ENCODE measurements at regions of chr9 and their contacts with region 1.

Region 1: DNA sequence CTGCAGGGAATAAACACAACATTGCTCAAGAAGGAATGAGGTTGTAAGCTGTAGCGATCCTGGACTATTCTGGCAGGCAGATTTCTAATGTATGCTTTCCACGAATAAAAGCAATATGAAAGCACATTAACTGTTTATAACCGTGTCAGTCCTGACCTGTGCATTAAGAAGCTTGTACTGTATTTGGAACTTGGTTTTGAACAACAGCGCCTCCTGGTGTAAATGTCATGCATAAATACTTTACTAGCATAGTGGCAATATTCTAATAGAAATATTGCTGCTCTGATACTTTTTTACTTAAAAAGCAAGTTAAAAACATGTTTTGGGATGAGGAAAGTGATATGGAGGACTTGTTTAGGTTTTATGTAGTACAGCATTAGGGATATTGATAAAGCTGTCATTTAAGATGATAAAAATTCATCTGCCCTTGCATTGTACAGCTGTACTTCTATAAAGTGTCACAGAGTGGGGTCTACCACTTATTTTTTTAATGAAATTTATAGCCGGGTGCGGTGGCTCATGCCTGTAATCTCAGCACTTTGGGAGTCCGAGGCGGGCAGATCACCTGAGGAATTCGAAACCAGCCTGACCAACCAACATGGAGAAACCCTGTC is 70.7 kb upstream of the GNE start:
- DNase-seq: no peak
- H3K4me3 ChIP-seq: no peak overlapping the region
- H3K27ac ChIP-seq: no peak overlapping the region
- H3K4me1 ChIP-seq: peaks cover 0 to 24% (median 13%) of the 10 kb centered on the region in 4 donors
- H3K27me3 ChIP-seq: no peaks in the 10 kb centered on the region
- CTCF ChIP-seq: peak; percentile 72 to 81 (median 81)
- EP300 ChIP-seq: no peak
- POLR2A ChIP-seq: no peak

Region 2: DNA sequence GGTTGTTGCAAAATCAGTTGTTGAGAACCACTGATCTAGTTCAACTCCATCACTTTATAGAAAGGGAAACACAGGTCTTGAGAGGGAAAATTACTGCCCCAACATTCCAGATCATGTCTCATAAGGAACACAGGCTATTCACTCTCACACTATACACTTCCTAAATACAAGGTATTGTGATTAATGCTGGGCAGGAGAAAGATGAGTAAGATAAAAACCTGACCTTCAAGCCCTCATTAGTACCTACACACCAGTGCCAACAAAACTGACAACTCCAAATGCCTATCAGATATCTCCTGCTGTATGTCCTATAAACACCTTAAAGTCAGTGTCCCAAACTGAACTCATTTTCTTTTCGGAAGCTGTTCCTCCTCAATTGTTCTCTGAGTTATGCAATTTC is 78.8 kb before region 1 on chr9:
- intact Hi-C with region 1: loop called (anchors 5 kb)
- DNase-seq: no peak
- H3K4me3 ChIP-seq: no peak overlapping the region
- H3K27ac ChIP-seq: no peak overlapping the region
- H3K4me1 ChIP-seq: peaks cover 0 to 41% (median 23%) of the 10 kb centered on the region in 4 donors
- H3K27me3 ChIP-seq: no peaks in the 10 kb centered on the region
- CTCF ChIP-seq: no peak
- EP300 ChIP-seq: no peak
- POLR2A ChIP-seq: no peak

Measured in esophagus muscularis mucosa (tissue), 4 donors.